Activated T-helper 1 cell treated with anti-CD3 and anti-CD28 coated beads, Interleukin-12 subunit alpha, Interleukin-12 subunit beta, Interleukin-2, Interleukin-4 antibody, amounts not matched to agents 30 ng/mL and 10 ng/mL and 1 ng/mL, durations not matched to agents 14 hours and 24 hours and 36 hours (primary cell): ENCODE measurements at regions of chr5 and their contacts with region 1.

Region 1: DNA sequence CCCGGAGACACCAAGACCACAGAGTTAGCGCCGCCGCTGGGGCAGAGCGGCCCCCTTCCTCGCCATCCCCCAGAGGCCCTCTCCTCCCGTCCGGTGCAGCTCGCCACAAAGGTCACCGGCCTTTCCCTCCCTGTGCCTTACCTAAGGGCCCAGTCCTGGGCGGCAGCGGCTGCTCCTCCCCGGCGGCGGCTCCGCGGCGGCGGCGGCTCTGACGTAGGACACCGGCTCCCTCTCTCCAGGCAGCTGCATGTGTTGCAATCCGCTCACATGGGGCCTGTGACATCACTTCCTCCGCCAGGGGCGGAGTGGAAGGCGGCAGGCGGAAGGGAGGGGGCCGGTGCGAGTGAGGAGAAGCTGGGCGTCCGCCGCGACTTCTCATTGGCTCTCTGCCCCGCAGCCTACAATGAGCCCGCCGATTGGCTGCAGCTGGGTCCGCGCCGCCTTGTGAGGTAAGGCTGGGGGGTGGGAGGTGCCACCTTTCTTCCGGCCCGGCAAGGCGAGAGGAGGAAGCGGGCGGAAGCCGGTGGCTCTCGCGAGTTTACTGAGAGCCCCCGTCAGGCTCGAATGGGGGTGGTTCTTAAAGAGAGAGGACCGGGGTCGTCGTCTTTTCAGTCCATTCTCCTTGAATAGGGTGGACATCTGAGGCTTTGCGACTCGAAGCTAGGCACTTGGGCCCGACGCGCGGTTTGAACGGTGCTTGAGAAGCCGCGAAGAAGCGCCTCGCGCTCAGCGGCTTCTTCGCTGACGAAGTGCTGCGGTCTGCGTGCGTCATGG is at the start of gene ETF1:
- DNase-seq: peak; percentile 100
- H3K4me3 Mint-ChIP-seq: peak within 1 kb of the TSS; percentile 99
- H3K27ac Mint-ChIP-seq: peak within 1 kb of the TSS; percentile 100
- H3K4me1 Mint-ChIP-seq: peaks cover 54% of the 10 kb centered on the region
- H3K27me3 Mint-ChIP-seq: no peaks in the 10 kb centered on the region
- total RNA-seq, gene ETF1: 201 and 219 TPM in 2 replicates

Region 2: GRCh38 chr5:137754126-137754960 is 788.8 kb before region 1 on chr5 and contains the start of gene HNRNPA0:
- intact Hi-C with region 1: loop called (anchors 10 kb)
- DNase-seq: peak; percentile 94
- H3K4me3 Mint-ChIP-seq: peak within 1 kb of the TSS; percentile 97
- H3K27ac Mint-ChIP-seq: peak within 1 kb of the TSS; percentile 100
- H3K4me1 Mint-ChIP-seq: peaks cover 22% of the 10 kb centered on the region
- H3K27me3 Mint-ChIP-seq: peaks cover 8% of the 10 kb centered on the region
- total RNA-seq, gene HNRNPA0: 37.5 and 37.8 TPM in 2 replicates

Region 3: DNA sequence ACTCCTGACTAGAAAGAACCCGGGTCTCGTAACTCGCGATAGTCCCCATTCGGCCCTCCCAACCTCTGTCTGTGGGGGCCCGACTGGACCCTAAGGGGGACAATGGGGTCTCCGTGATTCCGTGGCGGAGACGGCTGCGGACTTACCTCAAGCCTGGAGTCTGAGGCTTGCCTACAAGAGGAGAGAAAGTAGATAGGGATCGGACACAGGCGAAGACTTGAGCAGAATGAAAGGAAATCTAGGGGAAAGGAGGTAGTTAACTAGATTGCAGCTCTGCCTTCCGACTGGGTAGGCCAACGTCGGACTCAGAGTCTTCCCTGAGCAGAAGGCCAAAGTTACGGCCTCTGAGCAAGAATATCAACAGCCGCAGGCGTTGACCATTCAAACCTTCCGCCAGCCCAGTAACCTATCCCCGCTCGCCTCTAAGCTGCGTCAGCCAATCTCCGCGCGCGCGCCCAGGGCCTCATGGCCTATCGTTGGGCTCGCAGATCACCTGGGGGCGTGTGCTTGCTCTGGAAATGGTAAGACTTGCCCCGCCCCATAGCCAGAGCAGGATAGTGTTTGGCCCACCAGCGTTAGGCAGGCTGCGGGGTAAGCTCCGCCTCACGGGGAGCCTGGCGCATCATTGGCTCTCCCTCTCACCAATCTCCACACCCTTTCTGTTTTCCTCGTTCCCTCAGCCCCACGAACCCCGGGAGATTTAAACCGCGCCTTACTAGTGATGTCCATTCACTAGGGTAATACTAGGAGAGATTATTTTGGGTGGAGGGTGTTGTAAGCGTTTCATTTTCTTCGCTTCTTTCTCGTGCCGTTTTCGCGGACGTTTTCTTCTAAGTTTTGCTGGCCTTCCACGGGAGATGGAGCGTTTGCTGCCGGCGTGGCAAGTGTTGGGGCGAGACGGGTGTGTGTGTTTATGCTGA is 211.4 kb before region 1 on chr5 and contains the start of gene CDC25C:
- intact Hi-C with region 1: loop called (anchors 1 kb)
- DNase-seq: peak; percentile 97
- H3K4me3 Mint-ChIP-seq: peak within 1 kb of the TSS; percentile 85
- H3K27ac Mint-ChIP-seq: peak within 1 kb of the TSS; percentile 82
- H3K4me1 Mint-ChIP-seq: peaks cover 24% of the 10 kb centered on the region
- H3K27me3 Mint-ChIP-seq: no peaks in the 10 kb centered on the region
- total RNA-seq, gene CDC25C: 5.3 and 5.6 TPM in 2 replicates

Region 4: GRCh38 chr5:138449501-138450239 is 93.5 kb before region 1 on chr5:
- intact Hi-C with region 1: loop called (anchors 1 kb)
- DNase-seq: peak; percentile 74
- H3K4me3 Mint-ChIP-seq: peak overlapping the region; percentile 24
- H3K27ac Mint-ChIP-seq: peak overlapping the region; percentile 7
- H3K4me1 Mint-ChIP-seq: peaks cover 6% of the 10 kb centered on the region
- H3K27me3 Mint-ChIP-seq: peaks cover 6% of the 10 kb centered on the region

Region 5: GRCh38 chr5:138503487-138504270 is 39.5 kb before region 1 on chr5:
- intact Hi-C with region 1: no loop called
- DNase-seq: no peak
- H3K4me3 Mint-ChIP-seq: no peak overlapping the region
- H3K27ac Mint-ChIP-seq: no peak overlapping the region
- H3K4me1 Mint-ChIP-seq: peaks cover 5% of the 10 kb centered on the region
- H3K27me3 Mint-ChIP-seq: no peaks in the 10 kb centered on the region

Region 6: DNA sequence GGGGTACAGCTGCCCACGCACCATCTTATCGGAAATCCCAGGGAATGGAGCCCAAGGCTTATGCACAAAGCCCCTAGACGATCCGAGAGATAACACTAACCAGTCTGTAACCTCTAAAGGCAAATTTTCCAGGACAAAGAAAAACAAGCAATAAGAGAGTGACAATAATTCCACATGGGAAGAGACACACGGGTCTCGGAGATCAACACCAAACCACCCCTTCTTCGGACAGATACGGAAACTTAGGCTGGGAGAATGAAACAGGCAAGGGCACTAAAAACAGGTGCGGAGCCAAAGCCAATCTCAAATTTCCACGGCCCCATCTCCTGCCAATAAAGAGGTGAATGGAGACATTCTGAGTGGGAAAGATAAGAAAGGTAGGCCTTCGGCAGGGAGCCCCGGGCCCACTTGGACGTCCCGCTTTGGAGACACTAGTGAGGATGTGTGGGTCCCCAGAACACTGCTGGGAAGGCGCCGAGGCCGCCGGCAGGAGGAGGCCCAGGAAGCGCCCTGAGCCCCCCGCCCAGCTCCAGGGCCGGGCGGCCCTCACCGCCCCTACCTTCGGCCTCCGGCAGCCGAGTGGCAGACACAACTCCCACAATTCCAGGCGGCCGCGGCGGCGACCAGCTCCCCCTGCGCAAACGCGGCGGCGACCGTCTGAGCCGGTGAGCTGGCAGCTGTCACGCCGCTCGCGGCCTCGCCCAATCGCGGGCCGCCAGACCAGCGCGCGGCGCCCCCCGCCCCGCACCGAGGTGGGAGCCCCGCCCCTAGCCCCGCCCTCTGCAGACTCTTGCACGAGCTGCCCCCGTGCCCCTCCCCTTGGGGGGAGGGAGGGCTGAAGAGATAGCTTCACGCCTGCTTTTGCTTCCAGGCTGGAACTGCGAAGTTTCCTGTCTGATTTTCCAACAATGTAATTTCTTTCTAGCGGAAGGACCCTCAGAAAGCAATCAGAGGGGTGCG is 654.8 kb after region 1 on chr5 and contains the start of gene SIL1:
- intact Hi-C with region 1: loop called (anchors 1 kb)
- DNase-seq: peak; percentile 94
- H3K4me3 Mint-ChIP-seq: peak within 1 kb of the TSS; percentile 90
- H3K27ac Mint-ChIP-seq: peak within 1 kb of the TSS; percentile 89
- H3K4me1 Mint-ChIP-seq: peaks cover 32% of the 10 kb centered on the region
- H3K27me3 Mint-ChIP-seq: no peaks in the 10 kb centered on the region
- total RNA-seq, gene SIL1: 28.6 and 41.1 TPM in 2 replicates

Region 7: GRCh38 chr5:139403787-139404483 is 860.8 kb after region 1 on chr5 and contains the start of gene SPATA24:
- intact Hi-C with region 1: loop called (anchors 1 kb)
- DNase-seq: peak; percentile 98
- H3K4me3 Mint-ChIP-seq: peak within 1 kb of the TSS; percentile 91
- H3K27ac Mint-ChIP-seq: peak within 1 kb of the TSS; percentile 100
- H3K4me1 Mint-ChIP-seq: peaks cover 47% of the 10 kb centered on the region
- H3K27me3 Mint-ChIP-seq: no peaks in the 10 kb centered on the region
- total RNA-seq, gene SPATA24: 4.1 and 5.3 TPM in 2 replicates